ENCODE measurements at regions of chr3 and their contacts with region 1.

Region 1: GRCh38 chr3:126083913-126084767 is at the start of gene SLC41A3:
- DNase-seq: peak; percentile 94
- total RNA-seq, gene SLC41A3: 35.6 TPM

Region 2: GRCh38 chr3:125990253-125990970 is 93.7 kb before region 1 on chr3:
- intact Hi-C with region 1: loop called (anchors 5 kb)
- DNase-seq: peak; percentile 92

Region 3: DNA sequence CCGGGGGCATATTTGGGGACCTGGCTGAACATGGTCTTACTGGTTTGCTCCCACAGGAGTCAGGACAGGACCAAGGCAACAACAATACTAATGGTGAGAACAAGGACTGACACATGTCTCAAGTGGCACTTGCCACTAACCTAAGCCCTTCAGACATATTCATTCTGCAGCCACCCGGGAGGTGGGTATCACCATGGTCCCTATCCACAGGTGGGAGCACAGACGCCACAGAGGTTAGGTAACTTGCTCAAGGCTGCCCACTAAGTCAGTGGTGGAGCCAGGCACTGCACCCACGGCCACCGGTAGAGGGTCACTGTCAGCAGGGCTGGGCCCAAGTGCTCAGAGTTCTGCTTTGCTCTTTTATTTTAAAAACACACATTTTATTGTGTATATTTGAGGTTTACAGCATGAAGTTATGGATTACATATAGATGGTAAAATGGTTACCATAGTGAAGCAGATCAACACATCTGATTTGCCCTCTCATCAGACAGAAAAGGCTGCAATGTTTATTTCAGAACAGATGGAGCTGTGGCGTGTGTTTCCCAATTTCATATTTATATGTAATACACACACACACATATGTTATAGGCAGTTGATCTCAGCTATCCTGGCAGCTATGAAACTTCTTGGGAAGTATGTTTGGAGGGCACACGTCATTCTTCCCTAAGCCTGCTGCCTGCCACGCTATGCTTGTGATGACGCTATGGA is 29.7 kb after region 1 on chr3:
- intact Hi-C with region 1: no loop called
- DNase-seq: peak; percentile 63

Region 4: DNA sequence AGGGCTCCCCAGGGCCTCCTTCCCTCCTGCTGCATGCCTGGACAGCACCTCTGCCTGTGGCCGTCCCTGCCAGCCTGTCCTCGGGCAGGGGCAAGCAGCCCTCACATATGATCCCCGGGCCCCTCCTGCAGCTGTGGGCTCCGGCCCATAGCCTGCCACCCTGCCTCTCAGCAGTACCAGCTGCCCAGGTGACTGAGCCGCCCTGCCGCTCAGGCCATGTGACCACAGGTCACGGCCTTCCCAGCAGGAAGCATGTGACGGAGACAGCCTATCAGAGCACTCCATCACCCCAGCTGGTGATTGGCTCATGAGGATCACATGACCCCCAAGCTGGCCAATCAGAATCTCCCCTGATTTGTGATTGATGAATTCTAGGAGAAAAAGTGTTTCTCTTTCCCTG is 72.3 kb after region 1 on chr3:
- intact Hi-C with region 1: no loop called
- DNase-seq: no peak

Region 5: DNA sequence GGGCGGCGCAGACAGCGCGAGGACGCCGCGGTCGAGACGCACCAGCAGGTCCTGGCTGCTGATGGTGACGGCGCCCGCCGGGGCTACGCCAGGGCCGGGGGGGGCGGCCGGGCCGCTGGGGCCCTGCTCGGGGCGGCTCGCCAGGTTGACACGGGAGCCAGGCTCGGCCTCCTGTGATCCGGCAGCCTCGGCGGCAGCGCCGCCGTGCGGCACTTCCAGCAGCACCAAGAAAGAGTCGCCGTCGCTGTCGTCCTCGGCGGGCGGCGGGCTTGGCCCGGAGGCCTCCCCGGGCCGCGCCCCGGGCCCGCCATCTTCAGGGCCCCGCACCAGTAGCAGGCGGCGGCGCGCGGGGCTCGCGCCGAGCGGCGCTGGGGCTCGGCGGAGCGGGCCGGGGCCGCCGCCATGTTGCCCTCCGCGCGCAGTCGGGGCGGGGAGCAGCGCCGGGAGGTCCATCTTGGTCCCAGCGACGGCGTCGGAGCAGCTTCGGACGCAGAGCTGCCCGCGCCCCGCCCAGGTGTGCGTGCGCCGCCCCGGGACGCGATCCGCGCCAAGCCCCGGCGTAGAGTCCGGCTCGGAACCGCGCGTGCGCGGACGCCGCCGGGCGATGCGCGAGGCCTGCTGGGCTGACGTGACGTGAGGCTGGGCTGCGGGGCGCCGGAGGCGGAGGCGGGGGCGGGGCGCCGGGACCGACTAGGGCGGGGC is 391.4 kb after region 1 on chr3 and contains the start of gene ZXDC:
- intact Hi-C with region 1: loop called (anchors 10 kb)
- DNase-seq: peak; percentile 99
- total RNA-seq, gene ZXDC: 22.0 TPM

Measured in cardiac septum (tissue), 1 donor.